Breast epithelium (tissue), 4 donors: ENCODE measurements at regions of chr6 and their contacts with region 1.

Region 1: DNA sequence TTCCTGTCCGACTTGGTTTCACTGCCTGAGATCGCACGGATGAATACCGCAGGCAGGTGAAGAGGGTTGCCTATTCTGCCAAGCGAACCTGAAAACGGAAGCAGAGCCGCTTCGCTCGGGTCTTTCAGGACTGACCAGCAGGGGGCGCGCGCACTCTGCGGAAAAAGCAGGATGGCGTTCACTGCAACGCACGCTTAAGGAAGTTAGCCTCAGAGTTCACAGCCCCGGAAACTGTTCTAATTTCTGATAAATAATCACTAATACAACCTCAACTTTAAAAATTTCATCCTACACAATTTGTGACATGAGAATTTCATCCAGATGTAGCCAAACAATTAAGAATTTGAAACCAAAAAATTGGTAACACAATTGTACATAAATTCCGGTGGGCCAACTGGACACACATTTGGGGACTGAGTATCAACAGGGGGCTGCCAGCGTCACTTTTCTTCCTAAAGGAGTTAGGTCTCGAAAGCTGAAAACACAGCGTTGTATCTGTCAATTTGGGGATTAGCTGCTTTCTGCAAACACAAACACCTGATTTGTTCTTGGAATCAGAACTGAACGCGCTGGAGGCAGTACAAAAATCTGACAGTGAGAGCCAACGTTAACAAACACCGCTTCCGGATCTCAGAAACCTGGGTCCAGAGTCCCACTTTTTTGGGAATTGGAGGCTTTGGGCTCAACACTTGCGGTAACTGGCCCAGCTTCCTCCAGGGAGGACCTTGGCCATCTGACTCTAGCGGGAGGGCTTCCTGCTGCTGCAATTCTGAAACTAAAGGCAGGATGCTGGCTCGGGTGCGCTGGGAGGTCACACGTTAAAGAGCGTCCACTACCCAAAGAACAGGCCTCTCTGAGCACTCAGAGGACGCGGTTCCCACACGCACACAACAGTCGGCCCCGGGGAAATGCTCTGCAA is 8.8 kb downstream of the PXDC1 start:
- DNase-seq: peak; percentile 85 to 94
- H3K4me3 ChIP-seq: peak overlapping the region; percentile 0 to 43 (median 5)
- H3K27ac ChIP-seq: peak overlapping the region; percentile 75 to 87
- H3K4me1 ChIP-seq: peaks cover 7 to 8% of the 10 kb centered on the region in 2 donors
- H3K27me3 ChIP-seq: no peaks in the 10 kb centered on the region
- CTCF ChIP-seq: peak; percentile 96 to 99 (median 99)
- POLR2A ChIP-seq: no peak

Region 2: GRCh38 chr6:3990692-3991501 is 248.2 kb after region 1 on chr6:
- intact Hi-C with region 1: loop called (anchors 10 kb)
- DNase-seq: peak; percentile 87
- H3K4me3 ChIP-seq: peak overlapping the region; percentile 39 to 66 (median 47)
- H3K27ac ChIP-seq: peak overlapping the region; percentile 85 to 86
- H3K4me1 ChIP-seq: peaks cover 3 to 9% of the 10 kb centered on the region in 2 donors
- H3K27me3 ChIP-seq: no peaks in the 10 kb centered on the region
- CTCF ChIP-seq: peak; percentile 53 to 91 (median 87)
- POLR2A ChIP-seq: no peak